ENCODE measurements at regions of chr1 and their contacts with region 1.

Region 1: GRCh38 chr1:54934869-54935268 is 45.6 kb upstream of the TMEM61 start:
- DNase-seq: peak; percentile 96
- ATAC-seq: peak; percentile 95
- H3K4me3 ChIP-seq: no peak overlapping the region
- H3K27ac ChIP-seq: peak overlapping the region; percentile 98
- H3K4me1 ChIP-seq: peaks cover 9% of the 10 kb centered on the region
- H3K27me3 ChIP-seq: no peaks in the 10 kb centered on the region
- CTCF ChIP-seq: no peak
- POLR2A ChIP-seq: no peak
- RAD21 ChIP-seq: no peak

Region 2: GRCh38 chr1:53878492-53879105 is 1056.3 kb before region 1 on chr1:
- CTCF ChIA-PET with region 1: no interaction called
- POLR2A ChIA-PET with region 1: no interaction called
- dilution Hi-C with region 1: no loop called
- in situ Hi-C with region 1: no loop called
- intact Hi-C with region 1: no loop called
- DNase-seq: peak; percentile 69
- ATAC-seq: peak; percentile 65
- H3K4me3 ChIP-seq: no peak overlapping the region
- H3K27ac ChIP-seq: no peak overlapping the region
- H3K4me1 ChIP-seq: no peaks in the 10 kb centered on the region
- H3K27me3 ChIP-seq: no peaks in the 10 kb centered on the region
- CTCF ChIP-seq: peak; percentile 67
- POLR2A ChIP-seq: no peak
- RAD21 ChIP-seq: peak; percentile 72

Region 3: DNA sequence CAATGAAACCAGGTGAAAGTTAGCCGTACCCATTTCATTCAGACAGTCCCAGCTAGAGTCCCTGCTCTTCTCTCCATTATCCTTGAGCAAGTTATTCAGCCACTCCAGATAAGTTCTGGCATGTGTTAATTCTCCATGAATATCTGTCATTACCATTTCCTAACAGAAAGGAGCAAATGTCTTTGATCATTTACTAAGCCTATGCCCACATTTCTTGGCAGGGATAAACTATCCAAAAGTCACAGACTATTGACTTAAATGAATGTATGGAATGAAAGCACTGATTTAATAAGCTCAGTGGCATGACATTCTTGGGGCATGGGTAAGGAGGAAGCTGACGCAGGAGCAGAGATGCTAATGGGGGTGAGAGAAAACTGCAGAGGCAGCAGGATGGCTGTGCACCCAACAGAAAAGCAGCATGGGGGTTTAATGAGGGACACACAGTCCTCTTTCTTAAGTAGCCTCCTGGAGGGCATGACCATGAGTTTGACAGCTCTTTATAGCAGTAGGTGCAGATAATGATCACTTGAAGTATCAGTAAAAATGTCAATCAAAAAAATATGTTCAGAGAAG is 30.3 kb before region 1 on chr1:
- CTCF ChIA-PET with region 1: no interaction called
- POLR2A ChIA-PET with region 1: interaction called, 11 read pairs
- dilution Hi-C with region 1: no loop called
- in situ Hi-C with region 1: no loop called
- intact Hi-C with region 1: no loop called
- DNase-seq: peak; percentile 82
- ATAC-seq: peak; percentile 95
- H3K4me3 ChIP-seq: no peak overlapping the region
- H3K27ac ChIP-seq: no peak overlapping the region
- H3K4me1 ChIP-seq: peaks cover 3% of the 10 kb centered on the region; the same call in 1 of the 2 replicates
- H3K27me3 ChIP-seq: peaks cover 2% of the 10 kb centered on the region
- CTCF ChIP-seq: no peak
- POLR2A ChIP-seq: no peak
- RAD21 ChIP-seq: no peak

Region 4: DNA sequence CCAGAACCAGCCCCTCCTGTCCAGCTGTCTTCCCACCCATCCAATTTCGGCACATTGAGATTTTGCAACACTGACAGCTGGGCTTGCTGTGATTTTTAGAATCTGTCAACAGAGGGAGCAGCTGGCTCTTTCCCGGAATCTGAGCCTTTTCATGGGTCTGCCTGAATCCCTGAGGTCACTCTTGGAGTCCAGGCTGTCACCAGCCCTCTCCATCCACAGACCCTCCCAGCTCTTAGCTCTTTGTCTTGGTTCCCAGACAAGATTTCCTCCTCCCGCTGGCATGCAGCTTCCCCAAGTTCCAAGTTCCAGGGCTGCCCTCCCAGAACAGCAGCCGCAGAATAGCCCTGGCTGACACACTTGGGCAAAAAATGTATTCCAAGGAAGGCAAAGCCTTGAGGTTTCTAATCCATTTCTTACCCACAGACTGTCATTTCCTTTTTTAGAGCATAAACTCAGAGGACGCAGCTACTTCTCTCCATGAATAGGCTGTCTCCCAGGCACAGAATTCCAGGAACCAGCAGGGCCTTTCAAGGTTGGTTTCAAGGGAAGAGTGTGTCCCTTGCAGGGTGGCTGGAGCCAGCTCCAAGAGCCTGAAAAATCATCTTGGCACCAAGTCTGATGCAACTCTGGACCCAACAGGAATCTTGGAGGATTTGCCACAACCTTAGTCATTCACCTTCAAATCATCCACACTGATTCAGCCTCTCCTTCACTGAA is 38.5 kb after region 1 on chr1:
- CTCF ChIA-PET with region 1: no interaction called
- POLR2A ChIA-PET with region 1: no interaction called
- dilution Hi-C with region 1: no loop called
- in situ Hi-C with region 1: no loop called
- intact Hi-C with region 1: no loop called
- DNase-seq: peak; percentile 21
- ATAC-seq: peak; percentile 82
- H3K4me3 ChIP-seq: no peak overlapping the region
- H3K27ac ChIP-seq: no peak overlapping the region
- H3K4me1 ChIP-seq: peaks cover 2% of the 10 kb centered on the region
- H3K27me3 ChIP-seq: peaks cover 23% of the 10 kb centered on the region
- CTCF ChIP-seq: peak; percentile 45
- POLR2A ChIP-seq: no peak
- RAD21 ChIP-seq: peak; percentile 18; the same call in 1 of the 2 replicates

Measured in IMR-90 (cell line).